ENCODE measurements at regions of chr1 and their contacts with region 1.

Region 1: DNA sequence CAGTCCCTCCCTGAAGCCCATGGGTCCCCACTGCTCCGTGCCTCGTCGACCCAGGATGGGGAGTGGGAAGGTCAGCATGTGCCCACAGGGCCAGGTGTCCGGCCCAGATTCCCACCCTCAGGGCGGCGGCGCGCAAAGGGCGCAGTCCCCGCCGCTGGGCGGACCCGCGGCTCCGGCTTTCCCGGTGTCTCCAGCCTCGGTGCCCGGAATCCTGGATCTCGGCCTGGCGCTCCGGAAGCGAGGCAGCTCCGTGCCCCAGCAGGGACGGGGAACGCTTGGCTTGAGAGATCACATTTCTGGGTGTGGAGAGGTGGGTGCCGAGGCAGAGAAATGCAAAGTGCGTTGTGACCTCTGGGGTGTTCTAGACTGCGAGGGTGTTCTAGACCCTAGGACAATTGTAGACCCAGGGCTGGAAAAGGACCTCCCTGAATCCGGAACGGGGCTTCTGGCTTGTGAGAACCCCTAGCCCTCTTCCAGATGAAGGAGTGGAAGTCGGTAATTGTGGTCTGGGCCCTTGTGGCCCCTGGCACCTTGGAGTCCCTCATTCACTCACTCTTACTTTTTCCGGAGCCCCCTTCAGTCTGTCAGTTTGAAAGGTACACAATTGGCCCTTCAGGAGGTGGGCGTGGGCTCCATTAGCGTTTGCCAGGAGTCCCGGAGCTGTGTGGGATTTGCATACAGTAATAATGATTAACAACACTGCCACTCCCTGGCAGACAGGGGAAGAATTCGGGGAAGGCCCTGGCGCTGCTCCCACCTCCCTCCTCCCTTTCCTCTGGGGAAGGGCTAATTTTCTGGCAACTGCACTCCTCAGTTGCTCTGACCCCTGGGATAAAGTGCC is 1.6 kb upstream of the KCND3 start:
- DNase-seq: peak; percentile 66 to 70
- ATAC-seq: peak; percentile 65 to 67
- H3K4me3 ChIP-seq: peak overlapping the region; percentile 66 to 74 (median 70)
- H3K27ac ChIP-seq: peak overlapping the region; percentile 64 to 84 (median 78)
- H3K4me1 ChIP-seq: peaks cover 27 to 40% of the 10 kb centered on the region in 2 donors
- H3K27me3 ChIP-seq: no peaks in the 10 kb centered on the region
- CTCF ChIP-seq: peak; percentile 12 to 49 (median 25)
- POLR2A ChIP-seq: no peak

Region 2: DNA sequence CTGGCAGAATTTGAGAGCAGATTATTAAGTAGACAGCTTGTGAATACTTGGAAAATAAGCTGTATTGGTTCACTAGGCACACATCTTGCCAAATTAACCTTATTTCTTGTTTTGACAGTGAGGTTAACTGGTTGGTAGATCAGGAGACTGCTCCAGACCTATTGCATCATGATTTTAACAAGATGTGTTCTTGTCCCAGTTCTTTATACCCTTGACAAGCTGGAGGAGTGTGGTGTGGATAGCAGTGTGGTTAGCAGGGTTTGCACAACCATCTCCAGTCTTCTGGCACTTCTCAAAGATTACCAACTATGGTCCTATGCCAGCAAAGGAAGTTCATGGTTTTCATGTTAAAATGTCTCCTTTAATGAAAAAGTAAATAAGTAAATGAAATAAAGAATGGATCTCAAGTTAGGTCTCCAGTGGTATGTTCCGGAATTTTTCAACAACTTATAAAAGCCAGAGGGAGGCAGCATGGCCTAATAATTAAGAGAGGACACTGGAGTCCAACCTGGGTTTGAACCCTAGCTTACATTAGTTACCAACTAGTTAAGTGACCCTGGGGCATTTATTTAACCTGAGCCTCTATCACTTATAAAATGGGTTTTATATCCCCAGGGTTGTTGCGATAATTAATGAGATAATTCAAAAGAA is 201.3 kb before region 1 on chr1:
- in situ Hi-C with region 1: loop called in 2 of 4 experiments (anchors 25 kb)
- intact Hi-C with region 1: no loop called
- DNase-seq: no peak
- ATAC-seq: peak in 1 of 2 donors; percentile 78
- H3K4me3 ChIP-seq: no peak overlapping the region
- H3K27ac ChIP-seq: peak overlapping the region in 1 of 4 donors; percentile 16
- H3K4me1 ChIP-seq: no peaks in the 10 kb centered on the region
- H3K27me3 ChIP-seq: no peaks in the 10 kb centered on the region
- CTCF ChIP-seq: no peak
- POLR2A ChIP-seq: no peak

Region 3: DNA sequence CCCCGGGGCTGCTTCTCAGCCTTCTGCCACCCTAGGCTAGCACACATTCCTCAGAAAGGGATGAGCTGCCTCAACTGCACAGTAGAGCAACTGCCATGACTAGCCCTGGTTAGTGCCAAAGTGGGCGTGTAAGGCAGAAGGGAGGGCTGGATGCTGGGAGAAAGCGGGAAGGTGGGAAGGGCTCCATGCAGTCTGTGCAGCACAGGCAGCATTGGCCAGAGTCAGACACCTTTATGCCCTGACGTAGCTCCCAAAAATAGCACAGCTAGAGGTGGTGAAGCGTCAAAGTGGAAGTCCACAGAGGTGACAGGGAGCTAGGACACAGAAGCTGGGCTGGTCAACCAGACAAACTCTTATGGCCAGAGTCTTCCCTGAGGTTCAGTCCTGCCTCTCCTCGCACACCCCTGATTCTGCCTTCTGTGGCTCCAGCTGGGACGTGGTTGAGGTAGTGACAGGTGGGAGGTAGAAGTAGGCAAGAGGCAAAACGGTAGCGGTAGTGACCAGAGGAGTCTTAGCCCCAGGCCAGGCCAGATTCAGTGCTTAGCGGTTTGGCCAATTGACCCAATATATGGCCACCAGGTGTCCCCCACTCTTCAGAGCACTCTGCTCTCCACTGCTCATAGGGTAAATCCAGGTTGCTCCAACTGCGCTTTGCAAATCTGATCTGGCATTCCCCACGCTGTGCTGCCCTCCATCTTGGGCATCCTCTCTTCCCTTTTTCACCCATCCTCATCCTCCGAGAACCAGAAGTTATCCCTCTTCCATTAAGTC is 189.8 kb before region 1 on chr1:
- in situ Hi-C with region 1: loop called in 2 of 4 experiments (anchors 25 kb)
- intact Hi-C with region 1: loop called (anchors 1 kb)
- DNase-seq: no peak
- ATAC-seq: peak; percentile 82 to 86
- H3K4me3 ChIP-seq: no peak overlapping the region
- H3K27ac ChIP-seq: peak overlapping the region in 1 of 4 donors; percentile 49
- H3K4me1 ChIP-seq: peaks cover 0 to 3% of the 10 kb centered on the region in 2 donors
- H3K27me3 ChIP-seq: no peaks in the 10 kb centered on the region
- CTCF ChIP-seq: peak; percentile 13 to 46 (median 30)
- POLR2A ChIP-seq: no peak

Region 4: DNA sequence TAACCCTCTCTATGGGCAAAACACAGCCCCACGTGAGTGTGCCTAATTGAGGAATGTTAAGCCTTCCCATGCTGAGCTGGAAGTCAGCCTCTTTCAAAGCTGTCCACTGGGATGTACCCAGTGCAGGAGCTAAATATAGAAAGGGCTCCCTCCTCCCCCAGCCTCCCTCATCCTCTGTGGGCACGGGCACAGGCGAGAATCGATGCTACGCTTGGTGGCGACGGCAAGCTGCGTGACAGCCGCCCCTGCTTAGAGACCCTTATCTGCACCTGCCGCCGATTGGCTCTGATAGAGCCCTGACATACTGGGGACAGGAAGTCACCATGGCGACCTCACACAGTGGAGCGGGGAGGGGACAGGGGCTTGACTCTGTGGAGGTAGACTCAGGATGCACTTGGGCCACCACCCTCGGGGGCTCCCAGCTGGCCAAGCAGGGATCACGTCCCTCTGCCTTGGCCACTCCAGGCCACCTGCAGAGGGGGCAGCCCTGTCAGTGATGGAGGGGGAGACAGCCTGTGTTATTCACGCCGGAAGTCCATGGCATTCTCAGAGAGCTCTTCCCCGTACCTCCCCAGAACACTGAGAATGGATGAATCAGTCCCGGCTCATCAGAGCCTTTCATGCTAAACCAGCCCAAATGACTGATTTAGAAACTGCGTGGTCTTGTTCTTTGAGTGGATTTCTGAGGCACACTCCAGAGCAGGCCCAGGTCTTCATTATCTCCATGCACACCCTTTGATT is 86.5 kb before region 1 on chr1:
- in situ Hi-C with region 1: no loop called
- intact Hi-C with region 1: loop called (anchors 5 kb)
- DNase-seq: peak in 1 of 2 donors; percentile 25
- ATAC-seq: peak; percentile 86
- H3K4me3 ChIP-seq: peak overlapping the region in 1 of 4 donors; percentile 8
- H3K27ac ChIP-seq: peak overlapping the region in 1 of 4 donors; percentile 45
- H3K4me1 ChIP-seq: peaks cover 10 to 17% of the 10 kb centered on the region in 2 donors
- H3K27me3 ChIP-seq: no peaks in the 10 kb centered on the region
- CTCF ChIP-seq: no peak
- POLR2A ChIP-seq: no peak

Region 5: DNA sequence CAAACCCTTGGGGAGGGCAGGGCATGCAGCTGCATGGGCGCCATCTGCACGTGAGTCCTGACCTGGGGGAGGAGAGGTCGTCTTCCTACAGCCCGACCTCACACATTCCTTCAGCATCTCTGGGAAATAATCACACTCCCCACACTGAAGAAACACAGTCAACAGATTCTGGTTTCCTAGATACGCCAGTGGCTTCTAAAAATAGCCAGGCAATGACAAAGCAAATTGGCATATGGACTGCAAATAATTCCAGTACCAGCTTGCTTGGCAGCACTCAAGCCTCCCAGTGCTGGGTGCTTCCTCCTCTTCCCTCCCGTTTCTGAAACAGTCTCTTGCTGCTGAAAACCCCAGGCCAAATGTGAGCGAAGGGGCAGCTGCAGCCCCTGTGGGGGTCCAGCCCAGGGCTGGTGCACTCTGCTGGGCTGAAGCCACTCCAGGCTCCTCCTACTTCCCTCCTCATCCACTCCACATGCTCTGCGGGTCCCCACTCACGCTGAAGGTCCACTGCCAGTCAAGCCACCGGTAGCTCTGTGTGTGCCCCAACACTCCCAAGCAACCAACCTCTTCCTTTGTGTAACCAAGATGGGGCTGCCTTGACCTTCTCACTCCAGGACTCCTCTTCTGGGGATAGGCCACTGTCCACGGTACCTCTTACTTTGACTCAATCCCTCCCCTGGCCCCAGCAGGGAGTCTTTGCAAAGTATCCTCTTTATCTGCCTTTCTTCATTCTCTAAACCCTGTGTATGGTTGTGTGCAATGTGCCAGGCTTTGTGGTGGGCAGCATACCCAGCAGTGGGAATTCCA is 70.7 kb before region 1 on chr1:
- in situ Hi-C with region 1: no loop called
- intact Hi-C with region 1: loop called (anchors 1 kb)
- DNase-seq: peak; percentile 54 to 55
- ATAC-seq: peak; percentile 96 to 99
- H3K4me3 ChIP-seq: peak overlapping the region in 2 of 4 donors; percentile 3 to 31
- H3K27ac ChIP-seq: peak overlapping the region; percentile 77 to 87 (median 82)
- H3K4me1 ChIP-seq: peaks cover 17 to 23% of the 10 kb centered on the region in 2 donors
- H3K27me3 ChIP-seq: no peaks in the 10 kb centered on the region
- CTCF ChIP-seq: no peak
- POLR2A ChIP-seq: no peak

Region 6: GRCh38 chr1:111948209-111949171 is 42.6 kb before region 1 on chr1:
- in situ Hi-C with region 1: no loop called
- intact Hi-C with region 1: loop called (anchors 1 kb)
- DNase-seq: peak; percentile 90
- ATAC-seq: peak; percentile 83 to 97
- H3K4me3 ChIP-seq: peak overlapping the region in 2 of 4 donors; percentile 16 to 25
- H3K27ac ChIP-seq: peak overlapping the region; percentile 84 to 92 (median 90)
- H3K4me1 ChIP-seq: peaks cover 47 to 59% of the 10 kb centered on the region in 2 donors
- H3K27me3 ChIP-seq: no peaks in the 10 kb centered on the region
- CTCF ChIP-seq: no peak
- POLR2A ChIP-seq: no peak

Region 7: GRCh38 chr1:112209488-112209887 is 218.4 kb after region 1 on chr1:
- in situ Hi-C with region 1: no loop called
- intact Hi-C with region 1: no loop called
- DNase-seq: no peak
- ATAC-seq: no peak
- H3K4me3 ChIP-seq: no peak overlapping the region
- H3K27ac ChIP-seq: no peak overlapping the region
- H3K4me1 ChIP-seq: no peaks in the 10 kb centered on the region
- H3K27me3 ChIP-seq: no peaks in the 10 kb centered on the region
- CTCF ChIP-seq: no peak
- POLR2A ChIP-seq: no peak